Breast epithelium (tissue), 4 donors: ENCODE measurements at regions of chr5 and their contacts with region 1.

Region 1: DNA sequence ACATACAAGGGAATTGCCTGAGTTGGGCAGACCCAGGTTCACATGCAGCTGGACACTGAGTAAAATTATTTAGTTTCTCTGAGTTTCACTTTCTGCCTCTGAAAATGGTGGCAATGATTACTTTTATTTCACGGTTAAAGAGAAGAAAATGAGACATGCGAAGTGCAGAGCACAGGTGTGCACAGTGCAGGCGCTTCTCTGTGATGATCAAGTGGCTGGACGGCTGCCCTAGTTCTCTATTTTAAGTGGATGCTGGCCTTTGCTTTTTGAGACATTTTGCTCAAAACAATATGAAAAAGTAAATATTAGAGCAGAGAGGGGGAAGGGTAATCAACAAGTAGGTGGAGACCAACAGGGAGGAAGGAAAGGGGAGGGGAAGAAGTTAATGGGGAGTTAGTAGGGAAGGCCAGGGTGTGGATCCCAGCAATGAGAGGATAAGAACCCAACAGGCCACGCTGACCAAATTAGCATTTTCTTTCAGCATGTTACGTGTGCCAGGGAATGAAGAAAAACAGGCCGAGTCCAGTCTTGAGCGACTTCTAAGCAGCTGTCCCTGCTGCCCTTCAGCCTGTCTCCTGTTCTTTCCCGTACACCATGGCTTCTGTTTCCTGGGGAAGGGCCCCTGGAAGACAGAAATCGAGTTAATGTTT is 16.1 kb downstream of the SNX18 start:
- DNase-seq: peak in 1 of 2 donors; percentile 72
- H3K4me3 ChIP-seq: peak overlapping the region in 1 of 3 donors; percentile 27
- H3K27ac ChIP-seq: peak overlapping the region; percentile 86 to 90
- H3K4me1 ChIP-seq: peaks cover 4 to 8% of the 10 kb centered on the region in 2 donors
- H3K27me3 ChIP-seq: no peaks in the 10 kb centered on the region
- CTCF ChIP-seq: no peak
- POLR2A ChIP-seq: no peak

Region 2: GRCh38 chr5:54383225-54383901 is 150.3 kb before region 1 on chr5:
- intact Hi-C with region 1: loop called (anchors 5 kb)
- DNase-seq: no peak
- H3K4me3 ChIP-seq: no peak overlapping the region
- H3K27ac ChIP-seq: peak overlapping the region in 1 of 2 donors; percentile 44
- H3K4me1 ChIP-seq: no peaks in the 10 kb centered on the region
- H3K27me3 ChIP-seq: no peaks in the 10 kb centered on the region
- CTCF ChIP-seq: no peak
- POLR2A ChIP-seq: no peak

Region 3: GRCh38 chr5:54517174-54518092 is 16.2 kb before region 1 on chr5 and contains the start of gene SNX18:
- intact Hi-C with region 1: no loop called
- DNase-seq: peak; percentile 87
- H3K4me3 ChIP-seq: peak within 1 kb of the TSS; percentile 62 to 95 (median 85)
- H3K27ac ChIP-seq: peak within 1 kb of the TSS; percentile 95 to 97
- H3K4me1 ChIP-seq: peaks cover 6 to 8% of the 10 kb centered on the region in 2 donors
- H3K27me3 ChIP-seq: no peaks in the 10 kb centered on the region
- CTCF ChIP-seq: peak; percentile 93 to 99 (median 94)
- POLR2A ChIP-seq: no peak
- total RNA-seq, gene SNX18: 29.2 to 37.3 (median 33.1) TPM